ENCODE measurements at regions of chr9 and their contacts with region 1.

Region 1: GRCh38 chr9:2241836-2242741 is 226.9 kb downstream of the SMARCA2 start:
- DNase-seq: peak; percentile 82 to 87 (median 84)
- ATAC-seq: peak; percentile 88 to 96 (median 96)
- H3K4me3 ChIP-seq: peak overlapping the region; percentile 37 to 67 (median 57)
- H3K27ac ChIP-seq: peak overlapping the region in 11 of 12 donors; percentile 42 to 77 (median 65)
- H3K4me1 ChIP-seq: peaks cover 0 to 20% (median 6%) of the 10 kb centered on the region in 12 donors
- H3K27me3 ChIP-seq: no peaks in the 10 kb centered on the region
- CTCF ChIP-seq: peak in 1 of 12 donors; percentile 7
- POLR2A ChIP-seq: peak in 1 of 2 donors; percentile 41

Region 2: DNA sequence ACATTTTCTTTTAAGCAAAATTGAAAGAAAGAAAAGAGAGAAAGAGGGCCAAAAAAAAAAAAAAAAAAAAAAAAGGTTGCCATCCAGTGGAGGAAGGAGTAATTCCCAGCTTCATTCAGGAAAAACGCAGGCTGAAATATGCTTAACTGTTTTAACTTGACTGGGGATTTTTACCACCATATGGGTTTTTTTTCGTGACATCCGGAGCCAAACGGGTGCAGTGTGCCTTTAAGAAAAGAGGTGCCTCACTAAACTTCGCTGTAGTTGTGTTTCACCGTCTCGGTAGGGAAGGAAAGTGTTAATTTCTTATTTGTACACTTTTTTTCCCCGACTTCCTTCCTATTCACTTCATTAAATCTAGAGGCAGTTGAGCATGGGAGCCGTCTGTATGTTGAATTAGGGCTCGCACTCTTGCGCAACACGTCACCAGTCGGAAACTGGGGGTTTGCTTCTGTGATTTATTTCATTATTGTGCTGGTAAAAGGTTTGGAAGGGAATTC is 83.9 kb before region 1 on chr9:
- intact Hi-C with region 1: loop called in 2 of 10 experiments (anchors 5 kb)
- DNase-seq: peak in 3 of 5 donors; percentile 20 to 53 (median 36)
- ATAC-seq: peak; percentile 24 to 61 (median 48)
- H3K4me3 ChIP-seq: peak overlapping the region; percentile 1 to 71 (median 56)
- H3K27ac ChIP-seq: peak overlapping the region; percentile 51 to 79 (median 72)
- H3K4me1 ChIP-seq: peaks cover 0 to 65% (median 23%) of the 10 kb centered on the region in 12 donors
- H3K27me3 ChIP-seq: no peaks in the 10 kb centered on the region
- CTCF ChIP-seq: peak in 3 of 12 donors; percentile 8 to 22 (median 14)
- POLR2A ChIP-seq: no peak

Region 3: GRCh38 chr9:2849941-2850340 is 607.9 kb after region 1 on chr9:
- intact Hi-C with region 1: loop called in 1 of 10 experiments (anchors 10 kb)
- DNase-seq: no peak
- ATAC-seq: no peak
- H3K4me3 ChIP-seq: no peak overlapping the region
- H3K27ac ChIP-seq: no peak overlapping the region
- H3K4me1 ChIP-seq: peaks cover 0 to 12% (median 7%) of the 10 kb centered on the region in 12 donors
- H3K27me3 ChIP-seq: no peaks in the 10 kb centered on the region
- CTCF ChIP-seq: no peak
- POLR2A ChIP-seq: no peak

Measured in heart left ventricle (tissue), 16 donors.